CD8-positive, alpha-beta T cell (primary cell): ENCODE measurements at regions of chr9 and their contacts with region 1.

Region 1: GRCh38 chr9:26324786-26325443 is 567.7 kb downstream of the CAAP1 start:
- DNase-seq: no peak
- ATAC-seq: no peak
- H3K4me3 ChIP-seq: no peak overlapping the region
- H3K4me3 Mint-ChIP-seq: no peak overlapping the region
- H3K27ac ChIP-seq: no peak overlapping the region
- H3K27ac Mint-ChIP-seq: no peak overlapping the region
- H3K4me1 ChIP-seq: no peaks in the 10 kb centered on the region
- H3K4me1 Mint-ChIP-seq: no peaks in the 10 kb centered on the region
- H3K27me3 ChIP-seq: no peaks in the 10 kb centered on the region
- H3K27me3 Mint-ChIP-seq: no peaks in the 10 kb centered on the region
- CTCF ChIP-seq: no peak

Region 2: DNA sequence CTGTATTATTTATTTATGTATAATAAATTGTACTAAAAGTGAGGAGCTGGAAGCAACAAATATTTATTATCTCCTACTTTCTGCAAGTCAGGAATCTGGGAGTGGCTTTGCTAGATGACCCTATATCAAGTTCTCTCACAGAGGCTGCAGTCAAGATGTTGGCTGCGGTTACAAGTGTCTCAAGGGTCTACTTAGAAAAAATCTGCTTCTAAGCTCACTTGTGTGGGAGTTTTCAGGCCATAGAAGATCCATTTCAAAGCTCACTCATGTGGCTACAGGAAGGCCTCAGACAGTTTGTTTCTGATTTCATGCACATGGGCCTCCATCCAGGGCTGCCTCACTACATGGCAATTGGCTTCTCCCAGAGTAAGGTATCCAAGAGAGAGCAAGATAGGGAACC is 16.6 kb after region 1 on chr9:
- CTCF ChIA-PET with region 1: no interaction called
- POLR2A ChIA-PET with region 1: no interaction called
- intact Hi-C with region 1: loop called in 1 of 2 experiments (anchors 2 kb)
- DNase-seq: no peak
- ATAC-seq: no peak
- H3K4me3 ChIP-seq: no peak overlapping the region
- H3K4me3 Mint-ChIP-seq: no peak overlapping the region
- H3K27ac ChIP-seq: no peak overlapping the region
- H3K27ac Mint-ChIP-seq: no peak overlapping the region
- H3K4me1 ChIP-seq: no peaks in the 10 kb centered on the region
- H3K4me1 Mint-ChIP-seq: no peaks in the 10 kb centered on the region
- H3K27me3 ChIP-seq: no peaks in the 10 kb centered on the region
- H3K27me3 Mint-ChIP-seq: no peaks in the 10 kb centered on the region
- CTCF ChIP-seq: no peak

Region 3: DNA sequence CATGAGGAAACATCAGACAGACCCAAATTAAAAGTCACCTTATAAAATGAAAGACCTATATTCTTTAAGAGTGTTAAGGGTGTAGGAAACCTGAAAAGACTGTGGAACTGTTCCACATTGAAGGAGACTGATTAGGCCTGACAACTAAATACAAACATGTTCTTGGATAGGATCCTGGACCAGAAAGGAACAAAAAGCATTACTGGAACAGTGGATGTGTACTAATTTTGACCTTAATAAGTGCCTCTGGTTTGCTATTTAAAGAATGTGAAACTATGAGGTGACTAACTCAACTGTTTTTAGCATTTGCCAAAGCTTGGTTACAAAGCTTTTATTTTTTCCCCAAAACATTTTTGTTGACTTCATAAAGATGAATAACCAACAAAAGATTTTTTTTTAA is 227.1 kb after region 1 on chr9:
- CTCF ChIA-PET with region 1: no interaction called
- POLR2A ChIA-PET with region 1: no interaction called
- intact Hi-C with region 1: no loop called
- DNase-seq: no peak
- ATAC-seq: no peak
- H3K4me3 ChIP-seq: no peak overlapping the region
- H3K4me3 Mint-ChIP-seq: no peak overlapping the region
- H3K27ac ChIP-seq: no peak overlapping the region
- H3K27ac Mint-ChIP-seq: no peak overlapping the region
- H3K4me1 ChIP-seq: no peaks in the 10 kb centered on the region
- H3K4me1 Mint-ChIP-seq: no peaks in the 10 kb centered on the region
- H3K27me3 ChIP-seq: no peaks in the 10 kb centered on the region
- H3K27me3 Mint-ChIP-seq: no peaks in the 10 kb centered on the region
- CTCF ChIP-seq: no peak